Endothelial cell of umbilical vein (primary cell): ENCODE measurements at regions of chr22 and their contacts with region 1.

Region 1: DNA sequence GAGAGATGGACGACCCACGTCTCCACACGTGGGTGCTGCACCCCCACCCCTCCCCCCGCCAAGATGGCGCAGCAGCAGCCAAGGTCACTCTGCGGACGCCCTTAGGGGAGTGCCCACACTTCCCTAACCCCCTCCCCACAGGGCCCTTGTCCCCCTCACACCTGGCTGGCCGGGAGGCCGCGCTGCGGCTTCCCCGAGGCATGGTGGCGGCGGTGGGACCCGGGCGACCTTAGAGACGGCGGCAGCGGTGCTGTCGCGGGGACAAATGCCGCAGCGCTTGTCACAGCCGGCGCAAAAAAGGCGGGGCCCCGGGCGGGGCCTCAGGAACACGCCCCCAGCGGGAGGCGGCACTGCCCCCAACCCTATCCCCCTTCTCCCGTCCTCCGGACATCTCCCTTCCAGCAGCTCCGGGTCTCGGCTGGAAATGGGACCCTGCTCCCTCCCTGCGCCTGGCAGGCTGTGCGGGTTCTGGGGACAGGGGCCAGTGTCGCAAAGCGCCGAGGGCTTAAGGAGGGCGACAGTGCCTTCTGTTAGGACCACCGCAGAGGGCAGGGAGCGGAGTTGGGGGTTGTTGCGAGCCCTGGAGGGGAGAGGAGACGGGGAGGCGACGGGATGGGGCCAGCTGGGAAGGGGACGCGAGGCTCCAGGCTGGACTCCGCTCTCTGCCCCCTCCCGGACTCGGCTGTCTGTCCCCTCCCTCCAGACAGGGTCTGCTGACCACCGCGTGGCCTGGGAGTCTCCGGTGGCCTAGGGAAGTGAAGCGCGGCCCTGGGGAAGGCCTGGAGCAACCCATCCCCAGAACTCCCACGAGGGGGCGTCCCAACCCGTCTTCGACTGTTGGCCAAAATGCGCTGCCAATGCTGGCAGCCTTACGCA is at the start of gene CHCHD10:
- DNase-seq: peak; percentile 73
- H3K4me3 ChIP-seq: peak within 1 kb of the TSS; percentile 47 to 74 (median 55)
- H3K27ac ChIP-seq: peak within 1 kb of the TSS; percentile 43
- H3K4me1 ChIP-seq: peaks cover 22% of the 10 kb centered on the region
- H3K27me3 ChIP-seq: no peaks in the 10 kb centered on the region
- CTCF ChIP-seq: peak; percentile 81 to 93
- POLR2A ChIP-seq: peak; percentile 62
- total RNA-seq, gene CHCHD10: 64.8 and 75.6 TPM in 2 replicates

Region 2: GRCh38 chr22:23750714-23751440 is 17.0 kb before region 1 on chr22 and contains the start of gene ZNF70:
- CTCF ChIA-PET with region 1: interaction called, 7 read pairs
- POLR2A ChIA-PET with region 1: no interaction called
- dilution Hi-C with region 1: no loop called
- intact Hi-C with region 1: loop called (anchors 2 kb)
- DNase-seq: peak; percentile 60
- H3K4me3 ChIP-seq: peak within 1 kb of the TSS; percentile 88 to 92 (median 89)
- H3K27ac ChIP-seq: no peak within 1 kb of the TSS
- H3K4me1 ChIP-seq: peaks cover 10% of the 10 kb centered on the region
- H3K27me3 ChIP-seq: no peaks in the 10 kb centered on the region
- CTCF ChIP-seq: peak in 1 of 2 donors; percentile 40
- POLR2A ChIP-seq: no peak
- total RNA-seq, gene ZNF70: 6.0 and 6.2 TPM in 2 replicates

Region 3: GRCh38 chr22:23786752-23787599 is 19.1 kb after region 1 on chr22 and contains the start of gene SMARCB1:
- CTCF ChIA-PET with region 1: interaction called, 15 read pairs
- POLR2A ChIA-PET with region 1: interaction called, 3 read pairs
- dilution Hi-C with region 1: no loop called
- intact Hi-C with region 1: loop called (anchors 1 kb)
- DNase-seq: peak; percentile 84
- H3K4me3 ChIP-seq: peak within 1 kb of the TSS; percentile 19 to 81 (median 78)
- H3K27ac ChIP-seq: peak within 1 kb of the TSS; percentile 92
- H3K4me1 ChIP-seq: peaks cover 13% of the 10 kb centered on the region
- H3K27me3 ChIP-seq: no peaks in the 10 kb centered on the region
- CTCF ChIP-seq: no peak
- POLR2A ChIP-seq: peak; percentile 75
- total RNA-seq, gene SMARCB1: 113 and 130 TPM in 2 replicates

Region 4: GRCh38 chr22:23838681-23839468 is 71.0 kb after region 1 on chr22 and contains the start of gene DERL3:
- CTCF ChIA-PET with region 1: interaction called, 7 read pairs
- POLR2A ChIA-PET with region 1: no interaction called
- dilution Hi-C with region 1: no loop called
- intact Hi-C with region 1: loop called (anchors 1 kb)
- DNase-seq: peak; percentile 98
- H3K4me3 ChIP-seq: peak within 1 kb of the TSS in 2 of 3 experiments; percentile 26 to 40
- H3K27ac ChIP-seq: no peak within 1 kb of the TSS
- H3K4me1 ChIP-seq: peaks cover 2% of the 10 kb centered on the region
- H3K27me3 ChIP-seq: peaks cover 0 to 2% of the 10 kb centered on the region in 2 experiments
- CTCF ChIP-seq: no peak
- POLR2A ChIP-seq: no peak
- total RNA-seq, gene DERL3: 2.4 and 3.4 TPM in 2 replicates

Region 5: GRCh38 chr22:23857606-23858483 is 89.9 kb after region 1 on chr22 and contains the start of gene SLC2A11:
- CTCF ChIA-PET with region 1: interaction called, 11 read pairs
- POLR2A ChIA-PET with region 1: no interaction called
- dilution Hi-C with region 1: no loop called
- intact Hi-C with region 1: no loop called
- DNase-seq: peak; percentile 98
- H3K4me3 ChIP-seq: peak within 1 kb of the TSS; percentile 64 to 83 (median 65)
- H3K27ac ChIP-seq: no peak within 1 kb of the TSS
- H3K4me1 ChIP-seq: peaks cover 15% of the 10 kb centered on the region
- H3K27me3 ChIP-seq: no peaks in the 10 kb centered on the region
- CTCF ChIP-seq: peak in 1 of 2 donors; percentile 32
- POLR2A ChIP-seq: peak; percentile 76
- total RNA-seq, gene SLC2A11: 3.6 and 4.6 TPM in 2 replicates